Left cardiac atrium (tissue), 4 donors: ENCODE measurements at regions of chr1 and their contacts with region 1.

Region 1: DNA sequence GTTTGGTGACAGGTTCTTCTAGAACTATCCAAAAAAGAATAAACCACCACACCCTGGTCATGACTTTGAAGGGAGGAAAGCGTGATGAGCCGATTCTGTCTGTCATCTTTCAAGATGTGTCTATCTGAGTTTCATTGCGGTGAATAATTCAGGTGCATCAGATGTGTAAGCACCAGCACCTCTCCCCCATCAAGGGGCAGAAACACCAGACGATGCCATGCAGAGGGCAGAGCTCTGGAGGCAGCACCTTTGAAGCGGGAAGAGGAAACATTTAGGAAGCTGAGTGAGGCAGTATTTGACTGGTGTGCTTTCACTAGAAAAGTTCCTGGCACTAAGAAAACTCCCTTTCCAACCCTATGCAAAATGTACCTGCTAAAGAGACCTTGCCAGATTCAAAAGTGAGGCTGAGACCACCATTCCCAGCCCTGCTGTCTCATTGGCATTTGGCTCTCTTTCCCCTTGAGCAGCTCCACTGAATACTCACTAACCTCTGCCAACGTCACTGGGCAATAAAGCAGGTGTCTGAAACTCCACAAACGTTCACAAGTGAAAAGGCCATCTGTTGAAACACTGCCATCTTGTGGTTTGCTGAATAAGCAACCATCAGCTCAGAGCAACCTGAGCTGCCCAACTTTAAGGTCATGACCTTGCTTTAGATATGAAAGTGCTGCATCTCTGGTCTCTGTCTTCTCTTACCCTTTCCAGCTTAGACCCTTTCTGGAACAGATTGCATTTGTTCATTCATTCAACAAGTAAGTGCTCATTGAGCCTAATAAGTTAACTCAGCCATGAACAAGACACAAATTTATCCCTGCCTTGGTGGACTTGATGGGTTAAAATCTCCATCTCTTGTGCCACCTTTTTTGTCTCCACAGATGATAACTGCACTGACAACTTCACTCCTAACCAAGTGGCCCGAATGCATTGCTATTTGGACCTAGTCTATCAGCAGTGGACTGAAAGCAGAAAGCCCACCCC is 228.6 kb downstream of the PAPPA2 start:
- DNase-seq: peak; percentile 27
- ATAC-seq: peak; percentile 60 to 71

Region 2: GRCh38 chr1:176374967-176375569 is 316.5 kb before region 1 on chr1:
- intact Hi-C with region 1: loop called in 1 of 2 experiments (anchors 10 kb)
- DNase-seq: peak; percentile 71
- ATAC-seq: peak; percentile 73 to 76

Region 3: GRCh38 chr1:176559878-176560277 is 131.7 kb before region 1 on chr1:
- intact Hi-C with region 1: loop called in 1 of 2 experiments (anchors 2 kb)
- DNase-seq: peak; percentile 46
- ATAC-seq: peak; percentile 93 to 97

Region 4: GRCh38 chr1:176656257-176656995 is 35.1 kb before region 1 on chr1:
- intact Hi-C with region 1: loop called in 1 of 2 experiments (anchors 1 kb)
- DNase-seq: peak; percentile 22
- ATAC-seq: peak; percentile 99 to 100

Region 5: GRCh38 chr1:176801514-176802020 is 110.0 kb after region 1 on chr1:
- intact Hi-C with region 1: loop called in 1 of 2 experiments (anchors 5 kb)
- DNase-seq: no peak
- ATAC-seq: peak; percentile 34 to 74

Region 6: GRCh38 chr1:176843352-176844297 is 152.1 kb after region 1 on chr1:
- intact Hi-C with region 1: loop called in 1 of 2 experiments (anchors 5 kb)
- DNase-seq: no peak
- ATAC-seq: peak; percentile 48 to 81